ENCODE measurements at regions of chr5 and their contacts with region 1.

Region 1: DNA sequence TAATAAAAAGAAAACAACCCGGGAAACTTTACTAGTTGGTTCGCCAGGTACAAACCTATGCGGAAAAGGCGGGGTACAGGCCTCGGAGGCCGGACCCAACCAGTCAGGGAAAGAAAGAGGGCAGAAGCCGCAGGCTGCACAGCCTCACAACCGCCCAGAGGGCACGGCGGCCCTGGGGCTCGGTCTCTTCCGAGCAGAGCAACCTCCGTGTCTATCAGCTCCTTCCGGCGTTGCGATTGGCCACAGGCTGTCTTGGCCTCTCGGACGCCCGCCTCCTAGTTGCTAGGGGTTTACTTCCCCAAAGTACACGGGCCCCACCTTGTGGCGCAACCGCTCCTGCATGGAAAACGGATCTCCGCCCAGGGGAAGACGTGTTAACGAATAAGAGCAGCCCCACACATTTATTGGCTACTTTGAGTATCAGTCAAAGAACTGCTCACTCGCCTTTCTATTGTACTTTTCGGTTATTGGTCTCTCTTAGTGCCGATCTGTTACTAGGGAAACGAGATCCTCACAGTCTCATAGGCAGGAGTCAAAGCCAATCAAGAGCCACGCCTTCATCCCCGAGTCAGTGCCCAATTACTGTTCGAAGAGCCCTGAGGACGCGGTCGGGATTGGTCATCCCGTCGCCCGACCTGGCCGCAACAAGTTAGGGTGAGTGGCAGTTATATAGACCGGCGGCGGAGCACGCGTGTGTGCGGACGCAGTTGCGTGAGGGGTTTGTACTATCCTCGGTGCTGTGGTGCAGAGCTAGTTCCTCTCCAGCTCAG is at the start of gene G3BP1:
- DNase-seq: peak; percentile 100
- H3K4me3 ChIP-seq: peak within 1 kb of the TSS; percentile 92
- H3K27ac ChIP-seq: peak within 1 kb of the TSS; percentile 97
- H3K4me1 ChIP-seq: peaks cover 34% of the 10 kb centered on the region
- H3K27me3 ChIP-seq: no peaks in the 10 kb centered on the region
- CTCF ChIP-seq: no peak; the same call in 1 of the 2 replicates
- total RNA-seq, gene G3BP1: 203 and 254 TPM in 2 replicates

Region 2: DNA sequence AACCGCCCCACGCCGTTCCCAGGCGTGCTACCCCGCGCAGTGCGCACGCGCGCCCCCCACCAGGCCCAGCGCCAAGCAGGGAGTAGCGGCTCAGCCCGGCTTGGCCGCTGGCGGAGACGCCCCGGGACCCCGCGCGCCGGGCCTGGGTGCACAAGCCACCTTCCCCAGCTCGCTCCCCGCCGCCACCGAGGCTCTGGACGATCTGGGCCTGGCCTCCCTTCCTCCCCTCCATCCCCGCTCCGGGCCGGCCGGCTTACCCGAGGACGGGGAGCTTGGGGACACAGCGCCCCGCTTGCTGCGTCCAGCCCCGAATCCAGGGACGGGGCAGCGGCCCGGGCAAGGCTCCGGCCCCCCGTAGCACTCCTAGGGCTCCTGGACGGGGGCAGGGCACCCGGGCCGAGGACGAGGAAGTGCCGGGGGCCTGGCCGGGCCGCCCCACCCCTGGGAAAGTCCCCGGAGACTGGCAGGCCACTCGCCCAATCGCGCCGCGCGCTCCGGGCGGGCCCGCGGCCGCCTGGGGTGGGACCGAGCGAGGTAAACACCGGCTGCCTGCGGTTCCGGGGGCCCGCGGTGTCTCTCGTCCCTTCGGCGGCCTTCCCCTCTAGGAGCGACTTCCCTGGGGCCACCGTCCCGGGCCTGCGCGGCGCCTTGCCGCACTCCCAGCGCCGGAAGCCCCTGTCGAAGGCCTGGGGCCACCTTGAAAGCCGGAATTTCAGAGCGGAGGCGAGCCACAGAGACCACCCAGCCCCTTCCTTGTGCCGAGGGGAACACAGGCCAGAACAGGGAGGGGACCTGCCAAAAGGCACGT is 690.6 kb before region 1 on chr5 and contains the start of gene TNIP1:
- CTCF ChIA-PET with region 1: no interaction called
- POLR2A ChIA-PET with region 1: no interaction called
- intact Hi-C with region 1: loop called (anchors 5 kb)
- DNase-seq: peak; percentile 78 to 98
- H3K4me3 ChIP-seq: peak within 1 kb of the TSS; percentile 75
- H3K27ac ChIP-seq: peak within 1 kb of the TSS; percentile 81
- H3K4me1 ChIP-seq: peaks cover 80% of the 10 kb centered on the region
- H3K27me3 ChIP-seq: no peaks in the 10 kb centered on the region
- CTCF ChIP-seq: no peak
- total RNA-seq, gene TNIP1: 122 and 124 TPM in 2 replicates

Region 3: DNA sequence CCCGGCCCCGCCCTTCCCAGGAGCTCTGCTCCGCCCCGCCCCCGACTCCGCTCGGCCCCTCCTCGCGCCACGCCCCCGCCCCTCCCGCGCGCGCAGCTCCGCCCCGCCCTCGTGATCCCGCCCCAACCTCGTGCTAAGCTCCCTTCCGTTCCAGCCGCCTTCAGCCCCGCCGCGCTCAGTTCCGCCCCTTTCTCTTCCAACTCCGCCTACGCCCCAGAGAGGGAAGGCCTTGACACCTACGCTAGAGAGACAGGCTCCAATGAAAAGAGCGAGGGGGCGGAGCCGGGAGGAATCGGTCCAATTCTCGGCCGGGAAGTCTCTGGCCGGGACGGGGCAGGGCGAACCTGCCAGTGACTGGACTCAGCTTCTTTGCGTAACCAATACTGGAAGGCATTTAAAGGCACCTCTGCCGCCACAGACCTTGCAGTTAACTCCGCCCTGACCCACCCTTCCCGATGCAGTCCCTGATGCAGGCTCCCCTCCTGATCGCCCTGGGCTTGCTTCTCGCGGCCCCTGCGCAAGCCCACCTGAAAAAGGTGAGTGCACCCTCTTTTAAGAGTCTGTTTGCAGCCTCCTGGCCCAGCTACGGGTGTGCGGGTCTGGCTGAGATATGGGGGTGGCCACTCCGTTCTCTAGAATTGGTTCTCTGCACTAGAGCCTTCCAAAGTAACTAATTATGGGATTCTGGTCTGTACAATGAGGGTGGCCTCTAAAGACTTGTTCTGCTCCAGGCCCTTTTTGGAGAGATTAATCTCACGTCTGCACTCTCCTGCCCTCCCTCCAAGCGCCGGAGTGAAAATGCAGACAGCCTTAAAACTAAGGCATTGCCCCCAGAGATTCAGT is 518.5 kb before region 1 on chr5 and contains the start of gene GM2A:
- CTCF ChIA-PET with region 1: no interaction called
- POLR2A ChIA-PET with region 1: interaction called, 5 read pairs
- intact Hi-C with region 1: loop called (anchors 5 kb)
- DNase-seq: peak; percentile 98 to 100
- H3K4me3 ChIP-seq: peak within 1 kb of the TSS; percentile 97
- H3K27ac ChIP-seq: no peak within 1 kb of the TSS
- H3K4me1 ChIP-seq: peaks cover 20% of the 10 kb centered on the region
- H3K27me3 ChIP-seq: no peaks in the 10 kb centered on the region
- CTCF ChIP-seq: no peak
- total RNA-seq, gene GM2A: 24.5 and 26.7 TPM in 2 replicates

Region 4: GRCh38 chr5:151659001-151659754 is 112.3 kb before region 1 on chr5:
- CTCF ChIA-PET with region 1: interaction called, 8 read pairs
- POLR2A ChIA-PET with region 1: interaction called, 6 read pairs
- intact Hi-C with region 1: loop called (anchors 1 kb)
- DNase-seq: peak; percentile 38 to 79
- H3K4me3 ChIP-seq: no peak overlapping the region
- H3K27ac ChIP-seq: no peak overlapping the region
- H3K4me1 ChIP-seq: no peaks in the 10 kb centered on the region
- H3K27me3 ChIP-seq: no peaks in the 10 kb centered on the region
- CTCF ChIP-seq: peak; percentile 93

Region 5: GRCh38 chr5:151787817-151788216 is 16.4 kb after region 1 on chr5:
- CTCF ChIA-PET with region 1: interaction called, 4 read pairs
- POLR2A ChIA-PET with region 1: interaction called, 5 read pairs
- intact Hi-C with region 1: loop called (anchors 2 kb)
- DNase-seq: no peak
- H3K4me3 ChIP-seq: no peak overlapping the region
- H3K27ac ChIP-seq: no peak overlapping the region
- H3K4me1 ChIP-seq: 0 out of 2 replicates have a peak, but pooled peaks cover 9% of the 10 kb centered on the region
- H3K27me3 ChIP-seq: no peaks in the 10 kb centered on the region
- CTCF ChIP-seq: no peak

Region 6: DNA sequence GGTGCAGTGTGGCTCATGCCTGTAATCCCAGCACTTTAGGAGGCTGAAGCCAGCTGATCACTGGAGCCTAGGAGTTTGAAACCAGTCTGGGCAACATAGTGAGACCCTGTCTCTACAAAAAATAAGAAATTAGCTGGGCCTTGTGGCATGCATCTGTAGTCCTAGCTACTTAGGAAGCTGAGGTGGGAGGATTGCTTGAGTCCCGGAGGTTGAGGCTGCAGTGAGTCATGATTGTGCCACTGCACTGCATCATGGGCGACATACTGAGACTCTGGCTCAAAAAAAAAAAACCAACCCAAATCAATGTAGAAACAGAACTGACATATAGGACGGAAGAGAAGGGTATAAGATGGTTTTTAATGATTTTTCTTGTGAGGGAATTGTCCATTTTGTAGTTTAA is 28.0 kb after region 1 on chr5:
- CTCF ChIA-PET with region 1: no interaction called
- POLR2A ChIA-PET with region 1: no interaction called
- intact Hi-C with region 1: no loop called
- DNase-seq: no peak
- H3K4me3 ChIP-seq: no peak overlapping the region
- H3K27ac ChIP-seq: no peak overlapping the region
- H3K4me1 ChIP-seq: no peaks in the 10 kb centered on the region
- H3K27me3 ChIP-seq: no peaks in the 10 kb centered on the region
- CTCF ChIP-seq: no peak

Region 7: GRCh38 chr5:152593407-152593932 is 822.0 kb after region 1 on chr5:
- CTCF ChIA-PET with region 1: no interaction called
- POLR2A ChIA-PET with region 1: no interaction called
- intact Hi-C with region 1: no loop called
- DNase-seq: no peak
- H3K4me3 ChIP-seq: no peak overlapping the region
- H3K27ac ChIP-seq: no peak overlapping the region
- H3K4me1 ChIP-seq: no peaks in the 10 kb centered on the region
- H3K27me3 ChIP-seq: no peaks in the 10 kb centered on the region
- CTCF ChIP-seq: no peak; the same call in 1 of the 2 replicates